ENCODE measurements at regions of chr1 and their contacts with region 1.

Region 1: DNA sequence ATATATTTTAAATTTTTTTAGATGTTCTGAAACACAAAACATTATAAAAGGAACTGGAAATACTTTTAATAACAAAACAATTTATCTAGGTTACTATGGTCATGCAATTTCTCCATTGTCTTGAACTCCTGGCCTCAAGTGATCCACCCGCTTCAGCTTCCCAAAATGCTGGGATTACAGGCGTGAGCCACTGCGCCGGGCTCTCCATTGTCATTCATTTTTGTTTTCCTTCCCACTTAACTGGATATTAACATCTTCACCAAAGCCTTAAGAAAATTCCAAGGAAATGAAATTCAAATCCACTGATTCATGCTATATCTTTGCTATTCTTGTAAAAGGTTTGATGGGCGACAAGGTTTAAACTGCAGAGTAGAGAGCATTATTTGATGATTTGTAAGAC is 279.5 kb upstream of the PKN2 start:
- DNase-seq: no peak
- ATAC-seq: no peak
- H3K4me3 ChIP-seq: no peak overlapping the region
- H3K27ac ChIP-seq: no peak overlapping the region
- H3K4me1 ChIP-seq: no peaks in the 10 kb centered on the region
- H3K27me3 ChIP-seq: no peaks in the 10 kb centered on the region
- CTCF ChIP-seq: no peak

Region 2: GRCh38 chr1:87501738-87502137 is 902.8 kb before region 1 on chr1:
- CTCF ChIA-PET with region 1: no interaction called
- POLR2A ChIA-PET with region 1: interaction called, 24 read pairs
- in situ Hi-C with region 1: no loop called
- intact Hi-C with region 1: no loop called
- DNase-seq: no peak
- ATAC-seq: no peak
- H3K4me3 ChIP-seq: no peak overlapping the region
- H3K27ac ChIP-seq: no peak overlapping the region
- H3K4me1 ChIP-seq: no peaks in the 10 kb centered on the region
- H3K27me3 ChIP-seq: no peaks in the 10 kb centered on the region
- CTCF ChIP-seq: peak; percentile 13; the same call in 1 of the 2 replicates

Region 3: DNA sequence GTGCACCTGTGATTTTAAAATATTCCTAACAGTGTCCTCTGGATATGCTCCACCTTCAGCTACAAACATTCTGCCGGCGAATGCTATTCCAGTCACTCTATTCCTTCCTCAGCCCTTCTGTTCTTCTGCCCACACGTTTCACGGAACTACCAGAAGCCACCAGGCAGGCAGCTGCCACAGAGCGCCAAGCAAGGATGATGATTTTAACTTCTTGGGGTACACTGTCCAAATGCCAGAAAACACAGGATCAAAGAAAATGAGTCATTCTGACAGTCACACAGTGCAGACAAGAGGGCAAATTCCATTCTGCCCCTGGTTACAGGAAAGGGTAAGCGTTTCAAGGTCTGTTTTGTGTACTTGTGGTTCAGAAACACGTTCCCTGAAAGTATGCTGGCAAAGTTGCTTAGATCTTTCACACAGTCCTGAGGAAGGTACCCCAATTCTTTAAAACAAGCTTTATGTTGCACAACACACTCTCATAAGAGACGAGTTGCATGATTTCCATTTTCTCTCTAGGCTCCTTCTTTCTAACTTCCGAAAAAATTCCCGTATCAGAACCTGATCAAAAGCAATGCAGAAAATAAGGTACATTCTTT is 228.9 kb before region 1 on chr1:
- CTCF ChIA-PET with region 1: no interaction called
- POLR2A ChIA-PET with region 1: no interaction called
- in situ Hi-C with region 1: no loop called
- intact Hi-C with region 1: no loop called
- DNase-seq: no peak
- ATAC-seq: no peak
- H3K4me3 ChIP-seq: no peak overlapping the region
- H3K27ac ChIP-seq: no peak overlapping the region
- H3K4me1 ChIP-seq: no peaks in the 10 kb centered on the region
- H3K27me3 ChIP-seq: no peaks in the 10 kb centered on the region
- CTCF ChIP-seq: no peak

Region 4: DNA sequence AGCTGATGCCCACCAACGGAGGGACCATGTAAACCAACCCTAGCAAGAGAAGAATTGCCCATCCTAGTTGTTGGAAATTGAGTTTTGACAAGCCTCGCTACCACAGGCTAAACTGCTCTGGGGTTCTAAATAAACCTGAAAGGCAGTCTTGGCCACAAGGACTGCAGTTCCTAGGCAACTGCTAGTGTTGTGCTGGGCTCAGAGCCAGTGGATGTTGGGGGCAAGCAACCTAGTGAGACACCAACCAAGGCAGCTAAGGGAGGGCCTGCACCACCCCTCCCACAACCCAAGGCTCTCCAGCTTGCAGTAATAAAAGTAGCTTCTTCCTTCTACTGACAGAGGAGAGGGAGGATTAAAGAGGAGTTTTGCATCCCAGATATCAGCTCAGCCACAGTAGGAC is 177.1 kb after region 1 on chr1:
- CTCF ChIA-PET with region 1: no interaction called
- POLR2A ChIA-PET with region 1: no interaction called
- in situ Hi-C with region 1: no loop called
- intact Hi-C with region 1: no loop called
- DNase-seq: no peak
- ATAC-seq: no peak
- H3K4me3 ChIP-seq: no peak overlapping the region
- H3K27ac ChIP-seq: no peak overlapping the region
- H3K4me1 ChIP-seq: no peaks in the 10 kb centered on the region
- H3K27me3 ChIP-seq: no peaks in the 10 kb centered on the region
- CTCF ChIP-seq: no peak